Caco-2 (cell line): ENCODE measurements at regions of chr14 and their contacts with region 1.

Region 1: GRCh38 chr14:37546621-37547447 is 48.2 kb downstream of the FOXA1 start:
- DNase-seq: peak; percentile 81 to 92
- H3K4me3 ChIP-seq: no peak overlapping the region
- H3K4me3 Mint-ChIP-seq: peak overlapping the region; percentile 46
- H3K27ac Mint-ChIP-seq: peak overlapping the region; percentile 82
- H3K4me1 ChIP-seq: peaks cover 61% of the 10 kb centered on the region
- H3K4me1 Mint-ChIP-seq: peaks cover 16% of the 10 kb centered on the region
- H3K27me3 ChIP-seq: no peaks in the 10 kb centered on the region
- H3K27me3 Mint-ChIP-seq: no peaks in the 10 kb centered on the region
- CTCF ChIP-seq: no peak

Region 2: GRCh38 chr14:37329189-37330001 is 217.4 kb before region 1 on chr14:
- CTCF ChIA-PET with region 1: no interaction called
- POLR2A ChIA-PET with region 1: no interaction called
- intact Hi-C with region 1: loop called (anchors 1 kb)
- DNase-seq: peak in 1 of 2 experiments; percentile 27
- H3K4me3 ChIP-seq: no peak overlapping the region
- H3K4me3 Mint-ChIP-seq: peak overlapping the region; percentile 56
- H3K27ac Mint-ChIP-seq: peak overlapping the region; percentile 65
- H3K4me1 ChIP-seq: peaks cover 23% of the 10 kb centered on the region
- H3K4me1 Mint-ChIP-seq: peaks cover 15% of the 10 kb centered on the region
- H3K27me3 ChIP-seq: no peaks in the 10 kb centered on the region
- H3K27me3 Mint-ChIP-seq: no peaks in the 10 kb centered on the region
- CTCF ChIP-seq: no peak

Region 3: DNA sequence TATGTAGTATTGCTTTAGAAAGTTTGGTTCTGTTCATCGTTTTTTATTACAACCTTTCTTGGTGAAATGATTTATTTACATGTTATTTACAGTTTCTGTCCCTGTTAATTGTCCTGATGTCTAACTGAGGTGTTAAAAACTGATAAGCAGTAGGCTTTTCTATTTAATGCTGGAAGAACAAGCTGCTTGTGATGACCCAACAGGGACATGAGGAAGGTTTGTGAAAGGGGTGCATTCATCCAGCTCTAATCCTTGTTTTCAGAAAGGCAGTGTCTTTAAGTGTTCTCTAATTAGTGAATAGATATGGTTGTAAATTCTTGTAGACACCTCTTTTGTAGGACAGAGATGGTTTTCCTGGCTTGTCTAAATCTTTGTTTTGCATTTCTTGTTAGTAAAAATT is 143.2 kb before region 1 on chr14:
- CTCF ChIA-PET with region 1: no interaction called
- POLR2A ChIA-PET with region 1: no interaction called
- intact Hi-C with region 1: loop called (anchors 1 kb)
- DNase-seq: no peak
- H3K4me3 ChIP-seq: no peak overlapping the region
- H3K4me3 Mint-ChIP-seq: no peak overlapping the region
- H3K27ac Mint-ChIP-seq: no peak overlapping the region
- H3K4me1 ChIP-seq: peaks cover 82% of the 10 kb centered on the region
- H3K4me1 Mint-ChIP-seq: peaks cover 44% of the 10 kb centered on the region
- H3K27me3 ChIP-seq: no peaks in the 10 kb centered on the region
- H3K27me3 Mint-ChIP-seq: no peaks in the 10 kb centered on the region
- CTCF ChIP-seq: no peak

Region 4: DNA sequence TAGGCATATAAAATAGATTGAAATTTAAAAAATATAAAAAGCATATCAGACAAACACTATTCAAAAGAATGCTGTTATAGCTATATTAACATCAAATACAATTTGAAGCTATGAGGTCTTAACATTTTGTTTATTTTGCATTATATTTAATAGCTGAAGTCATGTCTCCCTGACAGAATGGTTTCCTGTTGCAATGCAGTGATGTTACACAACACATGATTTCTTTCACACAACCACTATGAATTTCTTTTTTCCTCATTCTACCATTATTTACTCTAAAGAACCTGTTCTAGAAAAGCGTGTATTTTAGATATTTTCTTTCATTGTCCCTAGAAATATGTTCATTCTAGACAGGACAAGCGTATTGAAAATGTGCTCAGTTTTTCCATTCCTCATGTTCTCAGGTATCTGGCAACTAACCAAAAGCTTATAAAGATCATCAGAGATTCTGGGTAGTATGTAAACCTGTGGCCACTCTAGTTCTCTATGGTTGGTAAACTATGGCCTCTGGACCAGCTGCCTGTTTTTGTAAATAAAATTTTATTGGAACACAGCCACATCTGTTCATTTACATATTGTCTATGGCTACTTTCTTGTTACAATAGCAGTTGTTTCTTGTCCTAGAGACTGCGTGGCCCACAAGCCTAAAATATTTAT is 135.6 kb before region 1 on chr14:
- CTCF ChIA-PET with region 1: no interaction called
- POLR2A ChIA-PET with region 1: no interaction called
- intact Hi-C with region 1: loop called (anchors 1 kb)
- DNase-seq: no peak
- H3K4me3 ChIP-seq: no peak overlapping the region
- H3K4me3 Mint-ChIP-seq: no peak overlapping the region
- H3K27ac Mint-ChIP-seq: no peak overlapping the region
- H3K4me1 ChIP-seq: peaks cover 51% of the 10 kb centered on the region
- H3K4me1 Mint-ChIP-seq: peaks cover 21% of the 10 kb centered on the region
- H3K27me3 ChIP-seq: no peaks in the 10 kb centered on the region
- H3K27me3 Mint-ChIP-seq: no peaks in the 10 kb centered on the region
- CTCF ChIP-seq: no peak

Region 5: DNA sequence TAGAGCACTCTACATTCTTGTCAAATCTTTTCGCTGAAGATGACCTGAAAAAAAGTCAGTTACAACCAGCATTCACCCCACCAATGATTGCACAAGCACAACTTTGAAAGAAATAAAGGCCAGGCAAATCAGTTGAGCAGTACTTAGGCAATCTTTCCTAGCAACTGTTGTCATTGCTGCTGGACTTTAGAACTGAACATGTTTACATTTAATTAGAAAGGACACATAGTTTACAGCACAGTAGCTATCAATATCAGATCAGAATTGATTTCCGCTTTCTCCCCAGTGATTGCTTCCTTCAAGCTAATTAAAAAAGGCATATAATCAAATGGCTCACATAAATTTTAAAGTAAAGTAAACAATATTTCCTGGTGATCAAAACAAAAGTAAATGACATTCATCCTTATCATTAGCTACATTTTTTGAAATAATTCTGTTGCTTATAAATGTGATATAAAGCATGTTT is 80.2 kb before region 1 on chr14:
- CTCF ChIA-PET with region 1: no interaction called
- POLR2A ChIA-PET with region 1: interaction called, 4 read pairs
- intact Hi-C with region 1: loop called (anchors 1 kb)
- DNase-seq: peak; percentile 85 to 88
- H3K4me3 ChIP-seq: no peak overlapping the region
- H3K4me3 Mint-ChIP-seq: peak overlapping the region; percentile 48
- H3K27ac Mint-ChIP-seq: peak overlapping the region; percentile 91
- H3K4me1 ChIP-seq: peaks cover 24% of the 10 kb centered on the region
- H3K4me1 Mint-ChIP-seq: peaks cover 11% of the 10 kb centered on the region
- H3K27me3 ChIP-seq: no peaks in the 10 kb centered on the region
- H3K27me3 Mint-ChIP-seq: no peaks in the 10 kb centered on the region
- CTCF ChIP-seq: no peak

Region 6: GRCh38 chr14:37583359-37584231 is 36.8 kb after region 1 on chr14:
- CTCF ChIA-PET with region 1: interaction called, 4 read pairs
- POLR2A ChIA-PET with region 1: no interaction called
- intact Hi-C with region 1: loop called (anchors 1 kb)
- DNase-seq: peak; percentile 92
- H3K4me3 ChIP-seq: peak overlapping the region; percentile 72
- H3K4me3 Mint-ChIP-seq: peak overlapping the region; percentile 78
- H3K27ac Mint-ChIP-seq: peak overlapping the region; percentile 97
- H3K4me1 ChIP-seq: peaks cover 32% of the 10 kb centered on the region
- H3K4me1 Mint-ChIP-seq: peaks cover 23% of the 10 kb centered on the region
- H3K27me3 ChIP-seq: no peaks in the 10 kb centered on the region
- H3K27me3 Mint-ChIP-seq: no peaks in the 10 kb centered on the region
- CTCF ChIP-seq: peak in 1 of 2 experiments; percentile 3

Region 7: GRCh38 chr14:37641125-37641524 is 94.3 kb after region 1 on chr14:
- CTCF ChIA-PET with region 1: no interaction called
- POLR2A ChIA-PET with region 1: no interaction called
- intact Hi-C with region 1: no loop called
- DNase-seq: no peak
- H3K4me3 ChIP-seq: no peak overlapping the region
- H3K4me3 Mint-ChIP-seq: no peak overlapping the region
- H3K27ac Mint-ChIP-seq: no peak overlapping the region
- H3K4me1 ChIP-seq: no peaks in the 10 kb centered on the region
- H3K4me1 Mint-ChIP-seq: no peaks in the 10 kb centered on the region
- H3K27me3 ChIP-seq: no peaks in the 10 kb centered on the region
- H3K27me3 Mint-ChIP-seq: no peaks in the 10 kb centered on the region
- CTCF ChIP-seq: no peak

Region 8: DNA sequence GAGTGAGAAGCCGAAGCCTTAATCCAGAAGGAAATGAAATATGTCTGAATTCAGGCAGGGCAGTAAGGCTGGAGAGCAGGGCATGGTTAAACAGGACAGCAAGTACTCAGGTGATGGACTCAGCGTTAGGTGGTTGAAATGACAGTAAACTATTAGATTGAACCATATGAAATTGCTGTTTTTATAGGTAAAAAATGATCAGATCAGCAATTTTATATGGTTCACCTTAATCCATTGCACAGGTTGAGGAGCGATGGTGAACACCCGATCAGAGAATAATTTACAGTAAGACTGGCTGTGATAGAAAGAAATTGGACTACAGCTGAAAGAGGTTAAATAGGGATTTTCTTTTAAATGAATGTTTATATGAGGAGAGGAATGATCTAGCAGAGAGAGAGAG is 105.2 kb after region 1 on chr14:
- CTCF ChIA-PET with region 1: no interaction called
- POLR2A ChIA-PET with region 1: no interaction called
- intact Hi-C with region 1: no loop called
- DNase-seq: no peak
- H3K4me3 ChIP-seq: no peak overlapping the region
- H3K4me3 Mint-ChIP-seq: no peak overlapping the region
- H3K27ac Mint-ChIP-seq: no peak overlapping the region
- H3K4me1 ChIP-seq: peaks cover 11% of the 10 kb centered on the region; the same call in 1 of the 2 replicates
- H3K4me1 Mint-ChIP-seq: no peaks in the 10 kb centered on the region
- H3K27me3 ChIP-seq: no peaks in the 10 kb centered on the region
- H3K27me3 Mint-ChIP-seq: no peaks in the 10 kb centered on the region
- CTCF ChIP-seq: no peak